A549 (cell line): ENCODE measurements at regions of chr3 and their contacts with region 1.

Region 1: DNA sequence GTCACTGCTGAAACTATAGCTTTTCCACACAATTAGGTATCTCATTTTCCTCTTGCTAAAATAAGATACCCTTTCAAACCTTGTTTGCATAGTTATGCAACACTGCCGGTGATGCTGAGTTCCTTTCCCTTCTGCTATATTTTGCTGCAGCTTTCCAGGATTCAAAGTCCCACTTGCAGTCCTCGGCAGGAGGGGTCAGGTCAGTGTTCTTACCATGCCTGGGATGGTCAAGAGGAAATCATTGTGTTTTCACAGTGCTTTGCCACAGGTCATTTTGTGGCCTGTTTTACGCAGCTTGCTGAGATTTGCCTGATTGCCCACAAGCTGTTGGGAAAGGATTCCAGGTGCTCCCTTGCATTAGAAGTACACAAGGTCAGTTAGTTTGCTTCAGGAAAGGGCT is 156.9 kb downstream of the B3GALNT1 start:
- DNase-seq: no peak
- ATAC-seq: no peak
- H3K4me3 ChIP-seq: no peak overlapping the region
- H3K27ac ChIP-seq: no peak overlapping the region
- H3K4me1 ChIP-seq: no peaks in the 10 kb centered on the region
- CTCF ChIP-seq: no peak
- EP300 ChIP-seq: no peak
- POLR2A ChIP-seq: no peak
- RAD21 ChIP-seq: no peak

Region 2: GRCh38 chr3:160921020-160921635 is 27.1 kb before region 1 on chr3:
- CTCF ChIA-PET with region 1: interaction called, 45 read pairs
- POLR2A ChIA-PET with region 1: no interaction called
- DNase-seq: peak; percentile 46 to 54
- ATAC-seq: peak; percentile 93 to 95
- H3K4me3 ChIP-seq: no peak overlapping the region
- H3K27ac ChIP-seq: no peak overlapping the region
- H3K4me1 ChIP-seq: no peaks in the 10 kb centered on the region
- CTCF ChIP-seq: peak; percentile 78
- EP300 ChIP-seq: no peak
- POLR2A ChIP-seq: no peak
- RAD21 ChIP-seq: peak; percentile 79 to 80